Gastrocnemius medialis (tissue), 4 donors: ENCODE measurements at regions of chr22 and their contacts with region 1.

Region 1: GRCh38 chr22:19619144-19620009 is 94.9 kb upstream of the SEPTIN5 start:
- DNase-seq: no peak
- ATAC-seq: no peak
- H3K4me3 ChIP-seq: no peak overlapping the region
- H3K27ac ChIP-seq: no peak overlapping the region
- H3K4me1 ChIP-seq: no peaks in the 10 kb centered on the region
- H3K27me3 ChIP-seq: peaks cover 0 to 3% (median 3%) of the 10 kb centered on the region in 3 donors
- CTCF ChIP-seq: no peak
- POLR2A ChIP-seq: no peak

Region 2: GRCh38 chr22:19357270-19358105 is 261.9 kb before region 1 on chr22:
- in situ Hi-C with region 1: no loop called
- intact Hi-C with region 1: no loop called
- DNase-seq: no peak
- ATAC-seq: peak in 1 of 2 donors; percentile 87
- H3K4me3 ChIP-seq: no peak overlapping the region
- H3K27ac ChIP-seq: peak overlapping the region in 2 of 4 donors; percentile 62 to 67
- H3K4me1 ChIP-seq: no peaks in the 10 kb centered on the region
- H3K27me3 ChIP-seq: no peaks in the 10 kb centered on the region
- CTCF ChIP-seq: no peak
- POLR2A ChIP-seq: no peak

Region 3: DNA sequence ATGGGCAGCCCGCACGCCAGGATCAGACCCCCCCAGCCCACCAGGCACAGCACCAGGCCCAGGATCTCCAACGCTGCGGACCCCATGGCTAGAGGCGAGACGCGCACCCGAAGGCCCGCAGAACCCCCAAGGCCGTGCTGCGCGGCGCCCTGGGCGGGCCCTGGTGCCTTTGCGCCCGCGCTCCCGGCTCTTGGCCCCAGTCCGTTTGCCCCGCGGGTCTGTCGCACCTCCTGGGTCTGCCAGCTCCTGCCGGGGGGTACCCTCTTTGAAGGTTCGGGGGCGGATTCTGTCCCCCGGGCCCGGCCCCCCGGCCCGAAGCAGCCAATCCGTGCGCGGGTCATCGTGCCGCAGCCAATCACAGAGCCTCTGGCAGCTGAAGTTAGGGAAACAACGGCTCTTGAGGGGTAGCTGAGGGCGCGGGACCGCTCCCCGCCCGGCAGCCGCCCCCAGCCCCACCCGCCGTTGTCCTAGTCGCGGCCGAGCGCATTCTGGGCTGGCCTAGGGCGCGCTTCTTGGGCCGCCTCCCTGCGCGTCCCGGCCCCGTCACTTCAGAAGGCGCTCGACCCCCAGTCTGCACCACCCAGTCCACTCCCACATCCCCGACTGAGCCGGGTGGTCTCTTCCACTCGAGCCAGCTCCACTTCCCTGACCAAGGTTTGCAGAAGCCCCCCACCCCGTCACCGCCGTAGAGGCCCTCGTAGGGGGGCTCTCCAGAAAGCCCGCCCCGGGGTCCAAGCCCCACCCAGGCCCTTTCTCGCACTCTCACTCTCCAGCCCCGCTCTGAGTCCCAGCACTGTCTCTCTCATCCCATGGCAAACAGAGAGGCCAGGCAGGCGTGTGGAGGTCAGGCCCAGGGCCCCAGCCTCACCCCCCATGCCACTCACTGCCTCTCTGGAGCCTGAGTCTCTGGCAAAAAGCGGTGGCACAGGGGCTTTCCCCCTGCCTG is 94.9 kb before region 1 on chr22 and contains the start of gene CLDN5:
- in situ Hi-C with region 1: no loop called
- intact Hi-C with region 1: no loop called
- DNase-seq: no peak
- ATAC-seq: peak; percentile 24 to 28
- H3K4me3 ChIP-seq: peak within 1 kb of the TSS; percentile 49 to 57 (median 52)
- H3K27ac ChIP-seq: peak within 1 kb of the TSS; percentile 61 to 85 (median 79)
- H3K4me1 ChIP-seq: peaks cover 0 to 8% of the 10 kb centered on the region in 2 donors
- H3K27me3 ChIP-seq: peaks cover 18 to 26% (median 24%) of the 10 kb centered on the region in 3 donors
- CTCF ChIP-seq: no peak
- POLR2A ChIP-seq: peak; percentile 47 to 82
- total RNA-seq, gene CLDN5: 40.4 to 108 (median 89.6) TPM

Region 4: DNA sequence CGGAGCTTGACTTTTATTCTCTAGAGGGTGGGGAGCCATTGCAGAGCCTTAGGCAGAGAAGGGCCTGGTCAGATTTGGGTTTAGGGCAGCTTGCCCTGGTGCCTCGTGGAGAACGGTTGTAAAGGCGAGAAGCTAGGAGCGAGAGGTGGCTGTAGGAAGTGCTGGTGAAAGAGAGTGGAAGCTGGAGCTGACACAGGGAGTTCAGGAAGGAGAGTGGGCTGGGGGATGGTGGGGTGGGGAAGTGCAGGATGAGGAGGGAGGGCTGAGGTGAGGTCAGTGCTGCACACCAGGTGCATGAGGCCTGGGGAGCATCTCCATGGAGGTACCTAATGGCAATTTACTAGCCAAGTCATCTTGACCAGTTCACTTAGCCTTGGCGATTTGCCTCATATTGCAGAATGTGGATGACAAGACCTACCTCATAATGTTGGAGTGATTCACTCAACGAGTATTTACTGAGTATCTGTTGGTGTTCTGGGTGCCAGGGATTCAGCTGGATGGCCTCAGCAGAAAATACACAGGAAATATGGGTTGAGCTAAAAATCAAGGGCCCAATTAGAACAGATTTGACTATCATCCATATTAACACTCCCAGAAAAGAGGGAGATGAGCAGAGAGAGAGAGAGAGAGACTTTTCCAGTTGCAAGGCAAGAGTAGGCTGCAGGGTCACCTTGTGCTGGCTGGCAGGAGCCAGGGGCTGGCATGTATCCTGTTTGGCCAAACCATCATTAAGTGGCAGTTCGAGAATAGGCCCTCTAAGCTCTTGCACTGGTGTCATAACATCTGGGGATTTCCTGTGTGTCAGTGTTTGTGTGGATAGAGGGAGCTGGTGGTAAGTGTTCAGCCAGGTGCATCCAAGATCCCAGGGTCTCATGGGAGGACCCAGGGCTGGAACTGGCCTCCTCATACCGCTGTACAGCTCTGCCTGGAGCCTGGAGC is 50.8 kb before region 1 on chr22:
- in situ Hi-C with region 1: no loop called
- intact Hi-C with region 1: loop called (anchors 5 kb)
- DNase-seq: no peak
- ATAC-seq: peak in 1 of 2 donors; percentile 60
- H3K4me3 ChIP-seq: no peak overlapping the region
- H3K27ac ChIP-seq: peak overlapping the region; percentile 59 to 77 (median 72)
- H3K4me1 ChIP-seq: peaks cover 4 to 11% of the 10 kb centered on the region in 2 donors
- H3K27me3 ChIP-seq: no peaks in the 10 kb centered on the region
- CTCF ChIP-seq: no peak
- POLR2A ChIP-seq: no peak